ENCODE measurements at regions of chr4 and their contacts with region 1.

Region 1: GRCh38 chr4:76896731-76897535 is 1.0 kb downstream of the SOWAHB start:
- DNase-seq: no peak
- ATAC-seq: peak; percentile 63
- H3K4me3 ChIP-seq: peak overlapping the region; percentile 63 to 75
- H3K27ac ChIP-seq: peak overlapping the region; percentile 69; the same call in 1 of the 2 replicates
- H3K4me1 ChIP-seq: peaks cover 3 to 15% of the 10 kb centered on the region in 2 experiments; a peak in 2 of 4 replicates
- H3K27me3 ChIP-seq: no peaks in the 10 kb centered on the region
- CTCF ChIP-seq: no peak
- POLR2A ChIP-seq: no peak
- RAD21 ChIP-seq: no peak

Region 2: GRCh38 chr4:76459291-76459723 is 437.6 kb before region 1 on chr4:
- CTCF ChIA-PET with region 1: no interaction called
- POLR2A ChIA-PET with region 1: no interaction called
- RAD21 ChIA-PET with region 1: no interaction called
- intact Hi-C with region 1: no loop called
- DNase-seq: peak; percentile 81
- ATAC-seq: peak; percentile 92
- H3K4me3 ChIP-seq: peak overlapping the region; percentile 7 to 33; a peak in 2 of 4 replicates
- H3K27ac ChIP-seq: peak overlapping the region; percentile 78
- H3K4me1 ChIP-seq: peaks cover 25 to 39% of the 10 kb centered on the region in 2 experiments
- H3K27me3 ChIP-seq: no peaks in the 10 kb centered on the region
- CTCF ChIP-seq: no peak
- POLR2A ChIP-seq: peak; percentile 10
- RAD21 ChIP-seq: no peak

Region 3: DNA sequence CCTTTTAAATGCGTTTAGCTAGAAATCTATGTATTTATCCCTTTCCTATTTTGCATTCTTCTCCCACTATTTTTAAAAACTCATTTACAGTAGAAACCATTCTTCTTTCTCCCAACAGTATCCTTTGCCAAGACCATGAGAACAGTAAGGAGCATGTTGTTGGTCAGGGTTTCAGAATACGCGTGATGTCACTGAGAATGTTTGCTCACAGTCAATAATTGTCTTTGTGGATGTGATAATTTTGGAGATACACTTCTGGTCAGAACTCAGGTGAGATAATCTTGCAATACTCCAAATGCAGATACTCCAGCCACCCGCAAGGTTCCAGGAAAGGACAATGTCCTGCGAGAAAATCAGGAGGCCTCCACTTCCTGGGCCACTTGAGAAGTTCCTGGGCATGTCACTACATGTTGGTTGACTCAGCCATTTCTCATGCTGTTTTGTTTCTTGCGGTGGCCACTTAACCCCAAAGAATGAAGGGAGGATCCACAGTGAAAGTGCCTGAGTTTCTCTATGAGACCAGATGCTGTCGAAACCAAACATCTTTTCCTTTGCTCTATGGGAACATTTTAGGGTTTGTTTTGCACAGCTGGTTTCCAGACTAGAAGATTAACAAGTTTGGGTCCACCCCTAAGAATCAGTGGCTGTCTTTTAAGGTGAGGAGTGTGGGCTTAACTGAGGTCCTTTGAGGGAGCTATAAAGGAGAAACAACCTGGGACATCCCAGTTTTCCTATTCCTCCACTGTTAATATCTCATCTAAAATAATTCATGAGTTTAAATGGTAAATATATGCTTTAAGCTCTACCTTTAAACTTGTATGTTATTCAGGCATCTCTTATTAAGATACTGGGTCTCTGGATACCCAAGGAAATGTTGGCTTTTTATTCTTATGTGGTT is 115.0 kb before region 1 on chr4:
- CTCF ChIA-PET with region 1: no interaction called
- POLR2A ChIA-PET with region 1: no interaction called
- RAD21 ChIA-PET with region 1: no interaction called
- intact Hi-C with region 1: loop called (anchors 5 kb)
- DNase-seq: peak; percentile 80
- ATAC-seq: peak; percentile 82
- H3K4me3 ChIP-seq: peak overlapping the region in 1 of 2 experiments; percentile 26; a peak in 2 of 4 replicates
- H3K27ac ChIP-seq: peak overlapping the region; percentile 86
- H3K4me1 ChIP-seq: peaks cover 45 to 48% of the 10 kb centered on the region in 2 experiments
- H3K27me3 ChIP-seq: no peaks in the 10 kb centered on the region
- CTCF ChIP-seq: no peak
- POLR2A ChIP-seq: no peak
- RAD21 ChIP-seq: no peak; the same call in none of the 2 replicates

Region 4: DNA sequence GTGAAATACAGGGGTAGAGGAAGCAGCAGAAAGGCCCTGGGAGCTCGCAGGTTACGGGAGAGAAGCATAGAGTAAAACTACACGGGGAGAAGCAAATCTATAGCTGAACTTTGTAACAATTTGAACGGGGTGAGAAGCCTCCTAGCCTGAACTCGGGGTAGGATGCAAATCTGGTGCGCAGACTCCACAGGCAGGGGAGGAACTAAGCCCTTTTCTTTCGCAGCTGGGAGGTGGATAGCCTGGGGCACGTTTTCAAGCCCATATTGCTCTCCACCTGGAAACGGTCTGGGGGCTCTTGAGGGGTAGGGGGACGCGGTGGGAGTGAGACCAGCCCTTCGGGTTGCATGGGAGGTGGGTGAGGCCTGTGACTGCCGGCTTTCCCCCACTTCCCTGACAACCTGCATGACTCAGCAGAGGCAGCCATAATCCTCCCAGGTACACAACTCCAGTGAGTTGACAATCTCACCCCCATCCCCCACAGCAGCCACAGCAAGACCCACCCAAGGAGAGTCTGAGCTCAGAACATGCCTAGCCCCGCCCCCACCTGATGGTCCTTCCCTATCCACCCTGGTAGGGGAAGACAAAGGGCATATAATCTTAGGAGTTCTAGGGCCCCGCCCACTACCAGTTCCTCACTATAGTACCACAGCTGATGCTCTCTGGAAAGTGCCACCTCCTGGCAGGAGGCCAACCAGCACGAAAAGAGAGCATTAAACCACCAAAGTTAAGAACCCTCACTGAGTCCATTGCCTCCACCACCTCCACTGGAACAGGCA is 28.9 kb before region 1 on chr4:
- CTCF ChIA-PET with region 1: no interaction called
- POLR2A ChIA-PET with region 1: no interaction called
- RAD21 ChIA-PET with region 1: no interaction called
- intact Hi-C with region 1: no loop called
- DNase-seq: no peak
- ATAC-seq: peak; percentile 78
- H3K4me3 ChIP-seq: no peak overlapping the region
- H3K27ac ChIP-seq: peak overlapping the region; percentile 33; the same call in 1 of the 2 replicates
- H3K4me1 ChIP-seq: peaks cover 8 to 13% of the 10 kb centered on the region in 2 experiments
- H3K27me3 ChIP-seq: no peaks in the 10 kb centered on the region
- CTCF ChIP-seq: no peak
- POLR2A ChIP-seq: no peak
- RAD21 ChIP-seq: no peak